ENCODE measurements at regions of chr1 and their contacts with region 1.

Region 1: GRCh38 chr1:226642876-226643576 is 94.5 kb downstream of the STUM start:
- DNase-seq: peak; percentile 33
- ATAC-seq: peak; percentile 79
- H3K4me3 ChIP-seq: no peak overlapping the region
- H3K27ac ChIP-seq: peak overlapping the region; percentile 64
- H3K4me1 ChIP-seq: peaks cover 27% of the 10 kb centered on the region
- H3K27me3 ChIP-seq: no peaks in the 10 kb centered on the region
- CTCF ChIP-seq: no peak
- EP300 ChIP-seq: no peak; a peak in 1 of 4 replicates
- POLR2A ChIP-seq: no peak
- RAD21 ChIP-seq: 0 out of 2 replicates have a peak, but pooled peaks have one; percentile 22

Region 2: GRCh38 chr1:226541631-226542622 is 101.1 kb before region 1 on chr1:
- CTCF ChIA-PET with region 1: no interaction called
- POLR2A ChIA-PET with region 1: no interaction called
- RAD21 ChIA-PET with region 1: no interaction called
- SMC1A ChIA-PET with region 1: no interaction called
- in situ Hi-C with region 1: no loop called
- intact Hi-C with region 1: no loop called
- DNase-seq: no peak
- ATAC-seq: no peak
- H3K4me3 ChIP-seq: no peak overlapping the region
- H3K27ac ChIP-seq: no peak overlapping the region
- H3K4me1 ChIP-seq: no peaks in the 10 kb centered on the region
- H3K27me3 ChIP-seq: no peaks in the 10 kb centered on the region; a peak in 2 of 4 replicates
- CTCF ChIP-seq: no peak
- EP300 ChIP-seq: no peak
- POLR2A ChIP-seq: no peak
- RAD21 ChIP-seq: no peak

Region 3: GRCh38 chr1:226626577-226626956 is 16.5 kb before region 1 on chr1:
- CTCF ChIA-PET with region 1: interaction called, 18 read pairs
- POLR2A ChIA-PET with region 1: no interaction called
- RAD21 ChIA-PET with region 1: interaction called, 7 read pairs
- SMC1A ChIA-PET with region 1: no interaction called
- in situ Hi-C with region 1: no loop called
- intact Hi-C with region 1: no loop called
- DNase-seq: peak; percentile 27
- ATAC-seq: peak; percentile 93
- H3K4me3 ChIP-seq: no peak overlapping the region
- H3K27ac ChIP-seq: no peak overlapping the region
- H3K4me1 ChIP-seq: peaks cover 6% of the 10 kb centered on the region
- H3K27me3 ChIP-seq: no peaks in the 10 kb centered on the region
- CTCF ChIP-seq: peak; percentile 79 to 97 (median 97)
- EP300 ChIP-seq: no peak
- POLR2A ChIP-seq: no peak
- RAD21 ChIP-seq: peak; percentile 82

Region 4: DNA sequence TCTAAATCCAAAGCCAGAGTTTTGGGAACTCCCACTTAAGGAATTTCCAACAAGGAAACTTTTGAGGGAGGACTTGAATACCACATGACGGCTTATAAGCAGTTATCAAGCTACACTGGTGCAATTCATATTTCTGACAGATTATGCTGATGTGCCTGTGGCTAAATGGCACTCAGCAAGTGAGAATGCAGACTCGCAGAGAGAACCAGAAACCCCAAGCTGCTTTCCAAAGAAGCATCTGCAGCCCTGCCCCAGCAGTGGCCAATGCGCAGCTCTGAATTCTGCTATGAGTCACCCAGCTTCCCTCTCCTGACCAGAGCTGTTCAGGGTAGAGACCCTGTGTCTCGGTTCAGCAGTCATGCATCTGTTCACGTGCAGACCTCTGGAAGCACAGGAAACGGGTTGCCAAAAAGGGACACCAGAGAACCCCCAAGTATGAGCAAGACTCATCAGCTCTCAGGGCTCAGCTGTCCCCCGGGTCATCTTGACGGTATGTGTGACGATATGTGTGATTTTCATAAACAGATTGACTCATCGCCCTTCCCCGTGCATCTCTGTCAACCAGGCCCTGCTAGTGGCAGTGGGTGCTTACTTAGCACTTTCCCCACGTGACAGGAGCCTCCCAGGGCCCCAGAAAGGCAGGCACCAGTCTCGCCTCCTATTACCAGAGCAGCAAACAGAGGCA is 19.8 kb after region 1 on chr1:
- CTCF ChIA-PET with region 1: interaction called, 12 read pairs
- POLR2A ChIA-PET with region 1: interaction called, 14 read pairs
- RAD21 ChIA-PET with region 1: interaction called, 26 read pairs
- SMC1A ChIA-PET with region 1: interaction called, 7 read pairs
- in situ Hi-C with region 1: no loop called
- intact Hi-C with region 1: loop called (anchors 1 kb)
- DNase-seq: peak; percentile 99
- ATAC-seq: peak; percentile 95
- H3K4me3 ChIP-seq: peak overlapping the region; percentile 5; the same call in 1 of the 2 replicates
- H3K27ac ChIP-seq: peak overlapping the region; percentile 48
- H3K4me1 ChIP-seq: peaks cover 57% of the 10 kb centered on the region
- H3K27me3 ChIP-seq: no peaks in the 10 kb centered on the region
- CTCF ChIP-seq: no peak
- EP300 ChIP-seq: peak; percentile 98
- POLR2A ChIP-seq: no peak
- RAD21 ChIP-seq: peak; percentile 14; the same call in 1 of the 2 replicates

Region 5: GRCh38 chr1:226679853-226680516 is 37.0 kb after region 1 on chr1:
- CTCF ChIA-PET with region 1: interaction called, 4 read pairs
- POLR2A ChIA-PET with region 1: no interaction called
- RAD21 ChIA-PET with region 1: interaction called, 10 read pairs
- SMC1A ChIA-PET with region 1: interaction called, 8 read pairs
- in situ Hi-C with region 1: no loop called
- intact Hi-C with region 1: no loop called
- DNase-seq: no peak
- ATAC-seq: peak; percentile 68
- H3K4me3 ChIP-seq: peak overlapping the region; percentile 57; the same call in 1 of the 2 replicates
- H3K27ac ChIP-seq: peak overlapping the region; percentile 51
- H3K4me1 ChIP-seq: peaks cover 63% of the 10 kb centered on the region
- H3K27me3 ChIP-seq: no peaks in the 10 kb centered on the region
- CTCF ChIP-seq: no peak
- EP300 ChIP-seq: no peak
- POLR2A ChIP-seq: peak; percentile 47; the same call in 1 of the 2 replicates
- RAD21 ChIP-seq: no peak

Region 6: GRCh38 chr1:226687426-226687825 is 44.4 kb after region 1 on chr1:
- CTCF ChIA-PET with region 1: interaction called, 11 read pairs
- POLR2A ChIA-PET with region 1: interaction called, 5 read pairs
- RAD21 ChIA-PET with region 1: interaction called, 5 read pairs
- SMC1A ChIA-PET with region 1: interaction called, 8 read pairs
- in situ Hi-C with region 1: no loop called
- intact Hi-C with region 1: no loop called
- DNase-seq: no peak
- ATAC-seq: peak; percentile 63
- H3K4me3 ChIP-seq: no peak overlapping the region
- H3K27ac ChIP-seq: no peak overlapping the region
- H3K4me1 ChIP-seq: peaks cover 26% of the 10 kb centered on the region
- H3K27me3 ChIP-seq: no peaks in the 10 kb centered on the region
- CTCF ChIP-seq: peak; percentile 11 to 36 (median 35); a peak in 4 of 6 replicates
- EP300 ChIP-seq: no peak
- POLR2A ChIP-seq: no peak
- RAD21 ChIP-seq: peak; percentile 43

Region 7: DNA sequence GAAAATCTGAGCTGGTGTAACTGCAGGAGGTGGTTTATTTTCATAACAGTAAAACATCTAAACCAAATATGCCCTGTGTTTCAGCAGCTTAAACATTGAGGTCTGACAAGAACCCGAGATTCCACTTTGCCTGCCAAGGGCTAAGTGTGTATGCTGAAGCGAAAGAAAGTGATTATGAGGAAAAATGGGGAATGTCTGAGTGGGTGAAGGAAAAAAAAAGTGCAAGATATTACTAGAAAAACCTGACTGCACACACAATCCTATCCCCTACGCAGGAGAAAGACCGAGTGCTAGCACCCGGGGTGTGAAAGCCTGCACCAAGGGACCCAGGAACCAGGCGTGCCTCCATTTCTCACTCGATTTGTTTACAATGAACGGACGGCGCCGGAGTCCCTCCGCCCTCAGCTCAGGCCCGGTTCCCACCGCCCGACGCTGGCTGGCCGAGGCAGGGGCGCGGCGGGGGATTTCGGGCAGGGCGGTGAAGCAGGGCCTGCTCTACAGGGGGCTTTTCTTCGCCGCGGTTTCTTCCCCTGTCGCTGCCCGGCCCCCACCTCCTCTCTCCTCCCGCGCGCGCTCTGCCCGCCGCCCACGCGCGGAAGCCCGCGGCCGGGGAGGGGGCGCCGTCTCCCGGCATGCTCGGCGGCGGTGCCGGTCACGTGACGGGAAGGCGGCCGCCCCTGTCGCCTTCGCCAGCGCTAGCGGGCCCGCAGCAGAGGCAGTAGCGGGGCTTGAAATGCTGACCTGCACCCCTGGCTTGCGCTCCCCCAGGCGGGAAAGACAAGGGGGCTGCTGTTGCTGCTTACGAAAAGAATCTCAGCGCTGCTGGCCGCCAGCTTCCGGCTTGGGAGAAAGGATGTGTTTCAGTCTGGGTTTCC is 60.2 kb after region 1 on chr1:
- CTCF ChIA-PET with region 1: interaction called, 3 read pairs
- POLR2A ChIA-PET with region 1: interaction called, 4 read pairs
- RAD21 ChIA-PET with region 1: interaction called, 12 read pairs
- SMC1A ChIA-PET with region 1: interaction called, 3 read pairs
- in situ Hi-C with region 1: no loop called
- intact Hi-C with region 1: no loop called
- DNase-seq: no peak
- ATAC-seq: peak; percentile 92
- H3K4me3 ChIP-seq: peak overlapping the region; percentile 54
- H3K27ac ChIP-seq: peak overlapping the region; percentile 92
- H3K4me1 ChIP-seq: peaks cover 12% of the 10 kb centered on the region
- H3K27me3 ChIP-seq: no peaks in the 10 kb centered on the region
- CTCF ChIP-seq: no peak
- EP300 ChIP-seq: peak in 1 of 2 experiments; percentile 41; a peak in 1 of 4 replicates
- POLR2A ChIP-seq: peak; percentile 93
- RAD21 ChIP-seq: no peak

Region 8: GRCh38 chr1:226731257-226731893 is 88.3 kb after region 1 on chr1:
- CTCF ChIA-PET with region 1: interaction called, 7 read pairs
- POLR2A ChIA-PET with region 1: no interaction called
- RAD21 ChIA-PET with region 1: interaction called, 13 read pairs
- SMC1A ChIA-PET with region 1: interaction called, 4 read pairs
- in situ Hi-C with region 1: no loop called
- intact Hi-C with region 1: no loop called
- DNase-seq: no peak
- ATAC-seq: peak; percentile 13
- H3K4me3 ChIP-seq: peak overlapping the region; percentile 65
- H3K27ac ChIP-seq: peak overlapping the region; percentile 45
- H3K4me1 ChIP-seq: peaks cover 36% of the 10 kb centered on the region
- H3K27me3 ChIP-seq: no peaks in the 10 kb centered on the region
- CTCF ChIP-seq: no peak
- EP300 ChIP-seq: no peak
- POLR2A ChIP-seq: no peak
- RAD21 ChIP-seq: no peak